ENCODE measurements at regions of chr7 and their contacts with region 1.

Region 1: GRCh38 chr7:90244909-90245851 is at the start of gene CFAP69:
- DNase-seq: peak; percentile 77
- H3K4me3 Mint-ChIP-seq: peak within 1 kb of the TSS; percentile 85
- H3K27ac Mint-ChIP-seq: no peak within 1 kb of the TSS
- H3K4me1 Mint-ChIP-seq: peaks cover 11% of the 10 kb centered on the region
- H3K27me3 Mint-ChIP-seq: peaks cover 41% of the 10 kb centered on the region
- total RNA-seq, gene CFAP69: 0.34 and 0.51 TPM in 2 replicates

Region 2: DNA sequence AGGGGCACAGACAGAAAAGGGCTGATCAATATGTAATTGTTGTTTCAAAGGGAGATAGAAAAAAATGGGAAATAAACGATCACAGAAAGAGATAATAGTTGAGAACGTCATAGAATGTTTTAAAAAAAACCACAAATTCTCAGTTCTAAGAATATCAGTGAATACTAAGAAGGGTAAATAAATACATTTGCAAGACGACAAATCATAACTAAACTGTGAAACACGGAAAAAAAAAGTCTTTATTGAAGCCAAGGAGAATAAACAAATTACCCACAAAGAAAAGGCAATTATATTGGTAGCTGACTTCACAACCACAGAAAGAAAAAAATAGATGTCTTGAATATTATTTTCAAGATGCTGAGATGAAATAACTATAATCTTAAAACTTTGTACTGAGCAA is 396.1 kb before region 1 on chr7:
- intact Hi-C with region 1: no loop called
- DNase-seq: no peak
- H3K4me3 Mint-ChIP-seq: no peak overlapping the region
- H3K27ac Mint-ChIP-seq: peak overlapping the region; percentile 13
- H3K4me1 Mint-ChIP-seq: no peaks in the 10 kb centered on the region
- H3K27me3 Mint-ChIP-seq: no peaks in the 10 kb centered on the region

Region 3: DNA sequence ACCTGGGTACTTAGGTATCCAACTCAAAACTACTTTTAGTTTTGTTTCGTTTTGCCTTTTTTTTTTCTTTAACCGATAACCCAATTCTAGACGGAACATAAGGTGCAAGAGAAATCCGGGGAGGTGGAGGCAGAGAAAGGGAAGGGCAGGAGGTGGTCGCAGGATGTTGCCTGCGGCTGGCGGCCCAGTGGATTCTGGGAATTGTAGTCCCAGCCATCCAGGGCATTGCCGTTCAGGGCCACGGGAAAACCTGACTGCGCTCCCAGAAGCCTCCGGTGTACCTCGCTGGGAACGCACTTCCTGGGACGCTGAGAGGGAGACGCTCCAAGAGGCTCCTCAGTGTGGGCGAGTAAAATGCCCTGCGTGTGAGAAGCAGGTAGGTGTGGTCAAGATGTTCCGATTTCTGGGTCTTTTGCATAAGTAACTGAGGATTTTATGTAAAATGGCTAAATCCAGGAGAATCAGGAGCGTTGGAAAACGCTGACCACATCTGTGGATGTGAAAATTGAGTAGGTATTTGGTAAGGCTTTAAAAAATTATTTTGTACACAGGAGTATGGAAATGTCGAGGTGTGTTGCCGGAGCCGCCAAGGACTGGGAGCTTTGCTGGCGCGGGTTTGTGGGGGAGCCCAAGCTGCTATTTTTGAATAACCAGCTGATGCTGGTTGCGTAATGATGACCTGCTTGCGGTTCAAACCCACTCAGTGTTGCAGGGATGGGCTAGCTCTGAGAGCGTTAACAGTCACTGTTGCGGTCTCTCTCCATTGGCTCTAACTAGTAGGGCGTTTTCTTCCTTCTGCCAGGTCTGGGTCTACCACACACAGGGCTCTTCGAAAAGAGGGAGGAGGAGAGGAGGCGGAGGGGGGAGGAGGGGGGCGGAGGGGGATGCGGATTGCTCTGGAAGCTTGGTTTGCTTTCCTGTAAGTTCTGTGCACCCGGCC is 158.3 kb after region 1 on chr7 and contains the start of gene CLDN12:
- intact Hi-C with region 1: loop called (anchors 5 kb)
- DNase-seq: peak; percentile 68
- H3K4me3 Mint-ChIP-seq: peak within 1 kb of the TSS; percentile 97
- H3K27ac Mint-ChIP-seq: peak within 1 kb of the TSS; percentile 92
- H3K4me1 Mint-ChIP-seq: peaks cover 21% of the 10 kb centered on the region
- H3K27me3 Mint-ChIP-seq: peaks cover 20% of the 10 kb centered on the region
- total RNA-seq, gene CLDN12: 7.1 and 7.2 TPM in 2 replicates

Region 4: GRCh38 chr7:90759710-90760109 is 514.5 kb after region 1 on chr7:
- intact Hi-C with region 1: no loop called
- DNase-seq: no peak
- H3K4me3 Mint-ChIP-seq: no peak overlapping the region
- H3K27ac Mint-ChIP-seq: no peak overlapping the region
- H3K4me1 Mint-ChIP-seq: no peaks in the 10 kb centered on the region
- H3K27me3 Mint-ChIP-seq: no peaks in the 10 kb centered on the region

Region 5: GRCh38 chr7:91299952-91300775 is 1055.0 kb after region 1 on chr7:
- intact Hi-C with region 1: no loop called
- DNase-seq: no peak
- H3K4me3 Mint-ChIP-seq: no peak overlapping the region
- H3K27ac Mint-ChIP-seq: no peak overlapping the region
- H3K4me1 Mint-ChIP-seq: no peaks in the 10 kb centered on the region
- H3K27me3 Mint-ChIP-seq: no peaks in the 10 kb centered on the region

Measured in activated T-helper 2 cell treated with anti-CD3 and anti-CD28 coated beads, Interferon-gamma antibody, Interleukin-2, Interleukin-4, amounts not matched to agents 10 μg/mL and 5 μg/mL and 100 μg/mL, durations not matched to agents 14 hours and 24 hours and 36 hours (primary cell).